Heart left ventricle (tissue), 16 donors: ENCODE measurements at regions of chr11 and their contacts with region 1.

Region 1: GRCh38 chr11:100687630-100688395 is 725 bp downstream of the ARHGAP42 start:
- DNase-seq: peak in 4 of 5 donors; percentile 54 to 59 (median 56)
- ATAC-seq: peak; percentile 45 to 77 (median 70)
- H3K4me3 ChIP-seq: peak overlapping the region; percentile 62 to 87 (median 74)
- H3K27ac ChIP-seq: peak overlapping the region; percentile 69 to 89 (median 82)
- H3K4me1 ChIP-seq: peaks cover 0 to 40% (median 13%) of the 10 kb centered on the region in 12 donors
- H3K27me3 ChIP-seq: peaks cover 0 to 7% (median 0%) of the 10 kb centered on the region in 9 donors
- CTCF ChIP-seq: peak; percentile 46 to 75 (median 60)
- POLR2A ChIP-seq: no peak

Region 2: DNA sequence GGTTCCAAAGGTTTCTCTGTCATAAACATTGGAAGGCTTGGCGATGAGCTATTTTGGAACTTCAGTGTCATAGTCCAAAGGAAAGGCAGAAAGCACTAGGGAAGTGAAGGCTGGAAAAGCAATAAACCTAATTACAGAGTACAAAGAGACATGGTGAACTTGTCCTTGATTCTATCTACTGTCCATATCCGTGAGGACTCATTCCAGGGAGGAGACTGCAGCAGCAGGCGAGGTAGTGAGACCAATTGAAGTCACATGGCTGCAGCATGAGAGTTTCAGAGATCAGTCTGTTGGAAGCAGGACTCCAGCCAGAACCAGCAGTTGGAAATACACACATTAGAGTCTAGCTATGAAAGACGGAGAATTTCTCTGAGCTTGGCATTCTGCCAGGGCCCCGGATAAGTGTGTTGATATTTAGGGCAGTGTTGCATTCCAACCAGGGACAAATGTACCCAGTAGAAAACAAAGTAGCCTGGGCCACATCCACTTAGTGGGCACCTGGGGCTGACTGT is 54.8 kb before region 1 on chr11:
- intact Hi-C with region 1: loop called in 2 of 10 experiments (anchors 2 to 5 kb)
- DNase-seq: peak; percentile 65 to 88 (median 77)
- ATAC-seq: peak; percentile 90 to 95 (median 93)
- H3K4me3 ChIP-seq: peak overlapping the region in 3 of 12 donors; percentile 8 to 23 (median 11)
- H3K27ac ChIP-seq: peak overlapping the region in 11 of 12 donors; percentile 36 to 83 (median 60)
- H3K4me1 ChIP-seq: peaks cover 0 to 33% (median 14%) of the 10 kb centered on the region in 12 donors
- H3K27me3 ChIP-seq: no peaks in the 10 kb centered on the region
- CTCF ChIP-seq: no peak
- POLR2A ChIP-seq: no peak

Region 3: DNA sequence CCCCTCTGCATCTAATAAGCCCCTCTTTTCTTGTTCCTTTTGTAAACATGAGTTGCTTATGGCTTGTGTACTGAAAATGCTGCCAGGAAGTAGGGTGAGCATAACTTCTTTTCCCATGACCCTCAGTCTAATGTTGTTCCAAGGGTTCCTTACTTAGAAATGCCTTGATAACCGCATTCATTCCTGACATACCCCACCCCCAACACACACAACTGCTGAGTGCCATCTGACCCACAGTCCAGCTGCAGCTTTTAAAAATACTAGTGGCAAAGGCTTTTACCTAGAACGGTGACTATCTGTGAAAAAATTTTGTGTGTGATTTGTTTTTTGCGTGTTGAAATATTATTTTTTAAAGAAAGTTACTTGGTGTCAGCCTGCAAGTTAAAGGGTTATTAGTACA is 51.9 kb after region 1 on chr11:
- intact Hi-C with region 1: loop called in 2 of 10 experiments (anchors 5 kb)
- DNase-seq: peak in 3 of 5 donors; percentile 32 to 48 (median 38)
- ATAC-seq: peak; percentile 80 to 92 (median 88)
- H3K4me3 ChIP-seq: peak overlapping the region in 3 of 12 donors; percentile 1 to 9 (median 3)
- H3K27ac ChIP-seq: peak overlapping the region in 10 of 12 donors; percentile 6 to 73 (median 48)
- H3K4me1 ChIP-seq: peaks cover 0 to 64% (median 35%) of the 10 kb centered on the region in 12 donors
- H3K27me3 ChIP-seq: no peaks in the 10 kb centered on the region
- CTCF ChIP-seq: no peak
- POLR2A ChIP-seq: no peak

Region 4: GRCh38 chr11:100789500-100789899 is 101.7 kb after region 1 on chr11:
- intact Hi-C with region 1: loop called in 1 of 10 experiments (anchors 5 kb)
- DNase-seq: peak in 4 of 5 donors; percentile 41 to 71 (median 50)
- ATAC-seq: peak; percentile 56 to 84 (median 74)
- H3K4me3 ChIP-seq: no peak overlapping the region
- H3K27ac ChIP-seq: peak overlapping the region in 6 of 12 donors; percentile 16 to 43 (median 27)
- H3K4me1 ChIP-seq: peaks cover 0 to 50% (median 27%) of the 10 kb centered on the region in 12 donors
- H3K27me3 ChIP-seq: no peaks in the 10 kb centered on the region
- CTCF ChIP-seq: no peak
- POLR2A ChIP-seq: no peak

Region 5: DNA sequence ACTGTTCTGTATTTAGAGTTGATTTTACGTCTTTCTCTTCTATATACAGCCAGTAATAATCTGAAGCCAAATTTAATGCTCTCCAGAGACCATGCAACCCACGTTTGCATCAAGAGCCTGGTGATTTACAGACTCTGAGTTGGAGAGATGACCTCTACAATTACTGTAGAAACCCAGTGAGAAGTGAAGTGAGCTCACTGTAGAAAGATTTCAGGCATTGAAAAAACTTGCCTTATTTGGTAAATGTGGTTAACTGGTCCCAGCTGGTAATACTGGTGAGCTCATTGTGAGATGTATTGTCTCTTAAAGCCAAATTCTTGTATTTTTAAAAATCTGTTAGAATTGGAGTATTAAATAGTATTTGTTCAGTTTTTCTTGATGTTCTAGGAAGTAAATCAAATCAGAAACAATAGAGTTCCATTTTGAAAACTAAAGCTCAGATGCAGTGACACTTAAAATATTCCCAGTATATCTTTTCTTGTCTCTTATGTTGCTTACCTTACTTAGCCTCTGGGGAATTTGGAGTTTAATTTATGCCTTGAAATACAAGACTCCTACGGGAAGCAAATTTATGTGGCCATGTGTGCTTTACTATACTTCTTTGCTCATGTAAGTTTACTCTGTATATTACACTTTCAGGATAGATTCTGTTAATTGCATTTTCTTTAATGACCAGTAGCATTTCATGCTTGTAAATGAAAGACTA is 189.2 kb after region 1 on chr11:
- intact Hi-C with region 1: no loop called
- DNase-seq: peak in 2 of 5 donors; percentile 27 to 30
- ATAC-seq: peak in 3 of 4 donors; percentile 73 to 91 (median 84)
- H3K4me3 ChIP-seq: no peak overlapping the region
- H3K27ac ChIP-seq: peak overlapping the region in 10 of 12 donors; percentile 21 to 82 (median 64)
- H3K4me1 ChIP-seq: peaks cover 0 to 34% (median 3%) of the 10 kb centered on the region in 12 donors
- H3K27me3 ChIP-seq: no peaks in the 10 kb centered on the region
- CTCF ChIP-seq: no peak
- POLR2A ChIP-seq: no peak

Region 6: GRCh38 chr11:100930185-100930778 is 242.5 kb after region 1 on chr11:
- intact Hi-C with region 1: loop called in 9 of 10 experiments (anchors 2 to 5 kb)
- DNase-seq: no peak
- ATAC-seq: peak in 3 of 4 donors; percentile 38 to 72 (median 49)
- H3K4me3 ChIP-seq: no peak overlapping the region
- H3K27ac ChIP-seq: no peak overlapping the region
- H3K4me1 ChIP-seq: no peaks in the 10 kb centered on the region
- H3K27me3 ChIP-seq: no peaks in the 10 kb centered on the region
- CTCF ChIP-seq: peak; percentile 49 to 77 (median 69)
- POLR2A ChIP-seq: no peak